ENCODE measurements at regions of chr17 and their contacts with region 1.

Region 1: DNA sequence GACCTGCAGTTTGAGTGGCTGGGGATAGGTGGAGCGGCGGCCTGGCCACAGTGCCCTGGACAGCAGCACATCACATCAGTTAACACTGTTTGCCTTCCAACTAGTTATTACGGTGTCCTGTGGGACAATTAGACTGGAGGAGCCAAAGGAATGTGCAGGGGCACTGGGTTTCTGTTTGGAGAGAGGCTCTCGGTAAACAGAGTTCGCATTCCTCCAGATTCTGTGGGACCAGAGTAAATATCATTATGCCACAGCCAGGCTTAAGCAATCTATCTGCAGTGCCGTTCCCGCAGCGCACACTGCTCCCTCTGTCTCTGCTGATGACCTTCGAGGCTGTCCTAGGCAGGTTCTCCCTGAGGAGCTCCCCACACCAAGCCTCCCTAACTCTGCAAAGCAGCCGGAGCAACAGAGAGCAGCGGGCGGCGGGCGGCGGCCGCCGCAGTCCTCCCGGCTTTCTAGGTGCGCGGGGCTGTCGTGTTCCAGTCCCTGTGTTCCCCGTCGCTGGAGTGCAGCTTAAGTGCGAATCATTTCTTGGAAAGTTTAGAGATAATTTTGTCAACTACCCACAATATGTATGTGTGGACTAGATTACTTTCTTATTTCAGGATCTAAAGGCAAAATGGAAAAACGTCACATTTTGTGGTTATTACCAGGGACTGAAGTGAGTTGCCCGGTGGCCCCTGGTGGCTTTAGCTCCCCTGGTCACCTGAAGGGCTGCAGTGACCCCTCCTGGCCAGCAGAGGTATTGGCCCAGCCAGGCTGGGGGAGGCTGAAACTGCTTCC is 43.2 kb downstream of the PGS1 start:
- DNase-seq: peak; percentile 76
- H3K4me3 ChIP-seq: no peak overlapping the region
- H3K27ac ChIP-seq: peak overlapping the region; percentile 27
- H3K4me1 ChIP-seq: peaks cover 74% of the 10 kb centered on the region
- H3K27me3 ChIP-seq: no peaks in the 10 kb centered on the region
- CTCF ChIP-seq: peak; percentile 100

Region 2: DNA sequence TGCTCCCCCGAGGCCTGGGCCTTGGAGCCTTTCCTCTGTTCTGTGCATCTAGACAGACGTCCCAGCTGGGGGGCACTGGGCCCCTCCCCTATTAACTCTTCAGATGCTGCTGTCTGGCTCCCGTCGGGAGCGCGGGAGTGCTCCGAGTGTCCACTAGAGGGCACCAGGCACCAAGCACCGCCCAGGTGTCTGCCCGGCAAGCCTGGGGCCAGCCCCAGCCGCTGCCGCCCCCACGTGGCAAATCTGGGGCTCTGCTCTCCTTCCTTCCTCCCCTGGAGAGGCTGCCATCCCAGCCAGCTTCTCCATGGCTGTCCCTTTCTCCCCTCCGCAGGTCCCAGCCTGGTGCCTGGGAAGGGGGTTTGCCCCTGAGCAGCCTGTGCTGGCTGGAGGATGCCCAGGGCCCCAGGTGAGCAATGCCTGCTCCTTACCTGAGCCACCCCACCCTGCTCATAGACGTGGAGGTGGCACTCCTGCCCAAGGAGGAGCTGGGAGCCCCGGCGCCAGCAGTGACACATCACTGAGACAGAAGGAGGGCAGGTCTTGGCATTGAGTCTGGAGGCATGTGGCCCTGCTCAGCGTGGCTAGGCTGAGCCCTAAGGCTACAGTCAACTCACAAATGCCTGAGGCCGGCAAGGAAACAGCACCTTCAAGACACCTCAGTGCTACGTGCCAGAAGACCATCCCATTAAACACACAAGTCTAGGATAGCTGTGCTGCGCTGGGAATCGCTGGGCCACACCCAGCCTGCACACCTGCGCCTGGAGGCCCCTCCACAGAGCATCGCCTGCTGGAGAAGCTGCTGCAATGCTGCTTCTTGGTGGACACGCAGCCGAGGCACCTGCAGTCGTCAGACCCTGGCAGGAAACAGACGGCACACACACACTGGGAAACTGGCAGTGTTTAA is 170.5 kb before region 1 on chr17:
- intact Hi-C with region 1: loop called (anchors 10 kb)
- DNase-seq: peak; percentile 80
- H3K4me3 ChIP-seq: no peak overlapping the region
- H3K27ac ChIP-seq: no peak overlapping the region
- H3K4me1 ChIP-seq: peaks cover 26% of the 10 kb centered on the region
- H3K27me3 ChIP-seq: no peaks in the 10 kb centered on the region
- CTCF ChIP-seq: peak; percentile 99

Region 3: GRCh38 chr17:78289802-78290363 is 131.8 kb before region 1 on chr17:
- intact Hi-C with region 1: loop called (anchors 5 kb)
- DNase-seq: peak; percentile 77
- H3K4me3 ChIP-seq: no peak overlapping the region
- H3K27ac ChIP-seq: no peak overlapping the region
- H3K4me1 ChIP-seq: peaks cover 22% of the 10 kb centered on the region
- H3K27me3 ChIP-seq: no peaks in the 10 kb centered on the region
- CTCF ChIP-seq: peak; percentile 82

Region 4: GRCh38 chr17:78360371-78361224 is 61.1 kb before region 1 on chr17:
- intact Hi-C with region 1: loop called (anchors 10 kb)
- DNase-seq: peak; percentile 92
- H3K4me3 ChIP-seq: peak overlapping the region; percentile 85
- H3K27ac ChIP-seq: peak overlapping the region; percentile 97
- H3K4me1 ChIP-seq: peaks cover 58% of the 10 kb centered on the region
- H3K27me3 ChIP-seq: no peaks in the 10 kb centered on the region
- CTCF ChIP-seq: peak; percentile 93

Region 5: DNA sequence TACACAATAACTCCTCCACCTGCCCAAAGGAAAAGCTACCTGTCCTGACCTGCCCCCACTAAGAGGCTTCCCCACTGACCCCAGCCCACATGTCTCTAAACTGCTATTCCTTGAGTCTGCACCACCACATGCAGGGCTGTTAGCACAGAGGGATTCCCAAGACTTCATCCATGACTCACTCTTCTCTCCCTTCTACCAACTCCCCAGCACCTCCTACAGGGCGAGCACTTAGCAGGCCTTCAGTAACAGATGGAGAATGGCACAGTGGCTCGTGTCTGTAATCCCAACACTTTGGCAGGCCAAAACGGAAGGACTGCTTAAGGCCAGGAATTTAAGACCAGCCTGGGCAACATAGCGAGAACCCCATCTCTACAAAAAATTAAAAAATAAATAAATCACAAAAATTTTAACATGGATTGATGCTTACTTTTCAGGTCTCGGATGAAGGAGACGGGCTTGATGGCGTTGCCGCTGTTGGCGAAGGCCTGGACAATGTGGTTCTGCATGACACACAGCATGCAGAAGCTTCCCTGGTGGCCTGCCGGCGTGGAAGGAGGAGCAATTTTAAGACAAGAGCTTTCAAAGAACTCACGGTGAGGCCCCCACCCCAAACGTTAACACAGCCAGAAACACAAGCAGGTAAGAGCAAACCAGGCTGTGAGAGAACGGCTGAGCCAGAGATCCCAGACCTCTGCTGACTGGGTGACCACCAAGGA is 407.0 kb after region 1 on chr17:
- intact Hi-C with region 1: no loop called
- DNase-seq: no peak
- H3K4me3 ChIP-seq: no peak overlapping the region
- H3K27ac ChIP-seq: no peak overlapping the region
- H3K4me1 ChIP-seq: no peaks in the 10 kb centered on the region
- H3K27me3 ChIP-seq: no peaks in the 10 kb centered on the region
- CTCF ChIP-seq: no peak